Endothelial cell of umbilical vein (primary cell): ENCODE measurements at regions of chrX and their contacts with region 1.

Region 1: GRCh38 chrX:46325312-46325877 is 219.8 kb downstream of the ZNF674 start:
- DNase-seq: peak; percentile 69
- H3K4me3 ChIP-seq: no peak overlapping the region
- H3K27ac ChIP-seq: peak overlapping the region; percentile 98
- H3K4me1 ChIP-seq: peaks cover 36% of the 10 kb centered on the region
- H3K27me3 ChIP-seq: no peaks in the 10 kb centered on the region
- CTCF ChIP-seq: no peak
- POLR2A ChIP-seq: no peak

Region 2: DNA sequence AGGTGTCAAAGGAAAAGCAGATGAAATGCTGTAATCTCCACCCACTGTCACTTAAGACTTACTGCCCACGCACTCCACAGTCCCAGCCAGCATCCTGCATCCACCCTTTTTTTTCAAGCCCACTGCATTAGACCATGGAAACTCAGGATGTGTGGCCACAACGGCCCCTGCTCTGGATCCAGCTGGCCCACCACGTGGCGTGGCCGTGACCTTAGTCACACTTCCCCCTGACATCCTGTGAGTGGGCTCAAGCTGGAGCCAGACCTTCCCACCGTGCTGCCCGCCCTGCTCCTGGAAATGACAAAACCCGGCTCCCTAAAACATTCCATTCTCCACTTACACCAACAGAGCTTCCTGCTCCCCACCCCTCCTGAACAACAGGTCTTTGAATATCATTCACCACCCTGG is 536.5 kb before region 1 on chrX:
- CTCF ChIA-PET with region 1: no interaction called
- POLR2A ChIA-PET with region 1: no interaction called
- dilution Hi-C with region 1: no loop called
- intact Hi-C with region 1: loop called (anchors 1 kb)
- DNase-seq: peak; percentile 79
- H3K4me3 ChIP-seq: peak overlapping the region in 1 of 3 experiments; percentile 14
- H3K27ac ChIP-seq: peak overlapping the region; percentile 78
- H3K4me1 ChIP-seq: peaks cover 28% of the 10 kb centered on the region
- H3K27me3 ChIP-seq: no peaks in the 10 kb centered on the region
- CTCF ChIP-seq: no peak
- POLR2A ChIP-seq: peak; percentile 33

Region 3: DNA sequence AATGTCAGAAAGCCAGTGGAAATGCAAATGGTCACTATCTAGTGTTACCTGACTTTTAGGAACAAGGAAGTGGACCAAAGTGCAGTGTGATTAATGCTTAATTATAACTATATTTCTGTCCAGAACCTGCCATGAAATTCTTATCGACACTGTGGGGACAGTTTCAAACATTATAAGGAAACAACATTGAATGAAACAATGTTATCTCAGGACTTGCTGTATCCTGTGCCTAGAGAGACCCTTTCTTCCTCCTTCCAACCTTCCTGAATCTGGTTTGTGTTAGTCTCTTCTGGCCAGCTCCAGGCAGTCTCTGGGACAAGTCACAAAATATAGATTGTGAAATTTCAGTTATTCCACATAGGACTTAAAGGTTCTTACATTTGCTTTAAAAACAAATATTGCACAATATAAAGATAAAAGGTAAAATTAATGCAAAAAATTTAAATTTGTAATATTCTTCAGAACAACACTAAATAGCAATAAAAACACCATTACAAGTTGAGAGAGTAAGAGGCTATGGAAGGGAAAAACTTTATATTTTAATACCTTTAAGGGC is 16.4 kb after region 1 on chrX:
- CTCF ChIA-PET with region 1: no interaction called
- POLR2A ChIA-PET with region 1: no interaction called
- dilution Hi-C with region 1: no loop called
- intact Hi-C with region 1: loop called (anchors 1 kb)
- DNase-seq: peak; percentile 72
- H3K4me3 ChIP-seq: no peak overlapping the region
- H3K27ac ChIP-seq: no peak overlapping the region
- H3K4me1 ChIP-seq: peaks cover 6% of the 10 kb centered on the region
- H3K27me3 ChIP-seq: no peaks in the 10 kb centered on the region
- CTCF ChIP-seq: no peak
- POLR2A ChIP-seq: no peak

Region 4: DNA sequence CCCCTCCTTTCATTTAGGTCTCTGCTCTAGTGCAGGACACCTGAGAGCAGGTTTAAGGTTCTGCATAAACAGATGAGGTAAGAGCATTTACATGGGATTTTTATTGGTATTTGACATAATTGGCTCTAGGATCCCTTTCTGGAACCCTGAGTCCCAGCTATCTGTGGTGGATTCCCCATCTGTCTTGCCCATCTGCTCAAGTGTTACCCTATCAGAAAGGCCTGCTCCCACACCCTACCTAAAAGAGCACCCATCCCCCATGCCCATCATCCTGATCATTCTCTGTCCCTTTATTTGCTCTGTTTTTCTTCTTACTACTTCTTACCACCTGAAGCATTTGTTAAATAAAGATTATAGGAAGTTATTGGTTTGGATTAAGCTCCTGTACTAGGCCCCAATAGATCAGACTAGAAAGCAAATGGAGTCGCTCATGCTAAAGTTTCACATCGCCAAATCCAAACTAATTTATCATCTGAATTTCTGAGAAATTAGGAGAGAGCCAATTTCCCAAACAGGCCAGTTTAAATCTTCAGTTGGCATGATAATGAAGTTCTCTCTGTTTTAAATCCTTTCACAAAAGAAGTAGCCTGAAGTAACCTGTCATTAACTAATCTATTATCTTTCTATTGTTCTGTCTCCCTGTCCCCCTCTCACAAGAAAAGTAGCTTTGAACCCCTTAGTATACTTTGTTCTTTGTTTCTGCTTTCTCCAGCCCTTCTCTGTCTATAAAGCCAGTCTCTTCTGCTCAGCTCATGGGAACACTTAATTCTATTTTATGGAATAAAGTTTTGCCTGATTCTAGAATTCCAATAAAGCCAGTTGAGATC is 41.2 kb after region 1 on chrX:
- CTCF ChIA-PET with region 1: no interaction called
- POLR2A ChIA-PET with region 1: no interaction called
- dilution Hi-C with region 1: no loop called
- intact Hi-C with region 1: no loop called
- DNase-seq: no peak
- H3K4me3 ChIP-seq: no peak overlapping the region
- H3K27ac ChIP-seq: no peak overlapping the region
- H3K4me1 ChIP-seq: no peaks in the 10 kb centered on the region
- H3K27me3 ChIP-seq: no peaks in the 10 kb centered on the region
- CTCF ChIP-seq: no peak
- POLR2A ChIP-seq: no peak